Calu3 (cell line): ENCODE measurements at regions of chr3 and their contacts with region 1.

Region 1: DNA sequence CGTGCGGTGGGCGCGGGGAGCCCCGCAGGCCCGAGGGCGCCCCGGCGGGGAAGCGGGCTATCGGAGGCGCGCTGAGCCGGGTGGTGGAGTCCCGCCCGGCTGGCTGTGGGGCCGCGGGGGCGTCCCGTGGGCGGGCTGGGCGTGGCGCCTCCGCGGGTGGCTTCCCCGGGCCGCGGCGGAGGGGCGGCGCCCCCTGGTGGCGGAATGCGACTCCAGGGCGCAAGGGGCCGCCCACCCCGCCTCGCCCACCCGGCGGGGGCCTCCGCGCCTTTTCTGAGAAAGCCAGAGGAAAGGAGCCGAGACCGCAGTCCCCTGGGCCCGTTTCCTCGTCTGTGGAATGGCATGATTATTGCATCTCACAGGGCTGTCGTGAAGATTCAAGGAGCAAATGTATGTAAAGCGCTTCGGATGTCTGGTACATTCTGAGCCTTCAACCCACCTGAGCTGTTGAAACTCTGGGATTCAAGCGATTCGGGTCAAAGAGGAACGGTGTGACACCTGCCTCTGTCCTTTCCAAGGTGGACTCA is 31.9 kb upstream of the RAB6B start:
- DNase-seq: peak; percentile 51
- H3K4me3 Mint-ChIP-seq: no peak overlapping the region
- H3K27ac Mint-ChIP-seq: no peak overlapping the region
- H3K4me1 Mint-ChIP-seq: no peaks in the 10 kb centered on the region
- H3K27me3 Mint-ChIP-seq: peaks cover 95% of the 10 kb centered on the region
- CTCF ChIP-seq: peak; percentile 94

Region 2: DNA sequence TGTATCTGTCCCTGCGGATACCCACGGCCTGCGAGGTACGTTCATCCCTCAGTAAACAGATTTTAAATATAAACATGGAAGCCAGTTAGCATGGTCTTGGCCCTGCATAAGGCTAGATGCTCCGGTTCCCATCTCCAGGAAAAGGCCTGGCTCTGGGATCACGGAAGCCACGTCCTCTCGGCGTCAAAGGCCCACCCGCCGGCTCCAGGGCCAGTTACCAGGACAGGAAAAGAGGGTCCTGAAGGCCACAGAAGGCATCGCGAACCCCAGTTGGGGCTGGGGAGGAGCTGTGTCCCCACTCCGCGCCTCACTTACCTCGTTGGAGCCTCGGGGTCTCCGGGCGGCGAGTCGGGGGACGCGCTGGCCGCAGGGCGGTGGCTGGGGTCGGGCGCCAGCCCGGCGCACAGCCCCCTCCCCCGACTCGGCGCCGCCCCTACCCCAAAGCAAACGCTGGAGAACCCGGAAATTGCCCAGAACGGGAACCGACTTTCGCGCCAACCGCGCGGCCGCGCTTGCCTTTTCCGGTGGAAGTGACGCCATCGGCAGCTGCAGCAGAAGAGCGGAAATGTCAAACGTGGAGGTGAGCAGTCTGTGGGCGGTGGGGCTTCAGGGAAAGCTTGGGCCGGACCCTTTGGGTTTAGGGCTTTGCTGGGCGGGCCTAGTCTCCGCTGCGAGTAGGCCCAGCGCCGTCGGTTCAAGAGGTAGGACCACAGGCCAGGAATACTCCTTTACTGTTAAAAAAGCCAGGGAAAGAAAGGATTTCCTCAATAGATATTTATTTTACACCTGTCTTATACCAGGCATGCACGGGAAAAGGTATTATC is 265.9 kb before region 1 on chr3 and contains the start of gene TOPBP1:
- CTCF ChIA-PET with region 1: no interaction called
- intact Hi-C with region 1: loop called (anchors 5 kb)
- DNase-seq: peak; percentile 91
- H3K4me3 Mint-ChIP-seq: peak within 1 kb of the TSS; percentile 82
- H3K27ac Mint-ChIP-seq: peak within 1 kb of the TSS; percentile 59
- H3K4me1 Mint-ChIP-seq: peaks cover 32% of the 10 kb centered on the region
- H3K27me3 Mint-ChIP-seq: no peaks in the 10 kb centered on the region
- CTCF ChIP-seq: no peak
- total RNA-seq, gene TOPBP1: 86.6 and 94.7 TPM in 2 replicates

Region 3: GRCh38 chr3:133964547-133964946 is 36.9 kb after region 1 on chr3:
- CTCF ChIA-PET with region 1: interaction called, 3 read pairs
- intact Hi-C with region 1: loop called (anchors 2 kb)
- DNase-seq: peak; percentile 60
- H3K4me3 Mint-ChIP-seq: no peak overlapping the region
- H3K27ac Mint-ChIP-seq: no peak overlapping the region
- H3K4me1 Mint-ChIP-seq: peaks cover 13% of the 10 kb centered on the region
- H3K27me3 Mint-ChIP-seq: peaks cover 90% of the 10 kb centered on the region
- CTCF ChIP-seq: peak; percentile 50

Region 4: GRCh38 chr3:134059671-134060560 is 132.3 kb after region 1 on chr3:
- CTCF ChIA-PET with region 1: no interaction called
- intact Hi-C with region 1: loop called (anchors 5 kb)
- DNase-seq: no peak
- H3K4me3 Mint-ChIP-seq: no peak overlapping the region
- H3K27ac Mint-ChIP-seq: no peak overlapping the region
- H3K4me1 Mint-ChIP-seq: peaks cover 9% of the 10 kb centered on the region
- H3K27me3 Mint-ChIP-seq: peaks cover 88% of the 10 kb centered on the region
- CTCF ChIP-seq: no peak

Region 5: GRCh38 chr3:134197681-134198261 is 270.2 kb after region 1 on chr3:
- CTCF ChIA-PET with region 1: interaction called, 3 read pairs
- intact Hi-C with region 1: loop called (anchors 5 kb)
- DNase-seq: peak; percentile 51
- H3K4me3 Mint-ChIP-seq: no peak overlapping the region
- H3K27ac Mint-ChIP-seq: no peak overlapping the region
- H3K4me1 Mint-ChIP-seq: peaks cover 23% of the 10 kb centered on the region
- H3K27me3 Mint-ChIP-seq: no peaks in the 10 kb centered on the region
- CTCF ChIP-seq: peak; percentile 84

Region 6: GRCh38 chr3:134299185-134299887 is 371.7 kb after region 1 on chr3:
- CTCF ChIA-PET with region 1: no interaction called
- intact Hi-C with region 1: loop called (anchors 5 kb)
- DNase-seq: no peak
- H3K4me3 Mint-ChIP-seq: no peak overlapping the region
- H3K27ac Mint-ChIP-seq: no peak overlapping the region
- H3K4me1 Mint-ChIP-seq: no peaks in the 10 kb centered on the region
- H3K27me3 Mint-ChIP-seq: no peaks in the 10 kb centered on the region
- CTCF ChIP-seq: peak; percentile 40